Ascending aorta (tissue), 2 donors: ENCODE measurements at regions of chr3 and their contacts with region 1.

Region 1: DNA sequence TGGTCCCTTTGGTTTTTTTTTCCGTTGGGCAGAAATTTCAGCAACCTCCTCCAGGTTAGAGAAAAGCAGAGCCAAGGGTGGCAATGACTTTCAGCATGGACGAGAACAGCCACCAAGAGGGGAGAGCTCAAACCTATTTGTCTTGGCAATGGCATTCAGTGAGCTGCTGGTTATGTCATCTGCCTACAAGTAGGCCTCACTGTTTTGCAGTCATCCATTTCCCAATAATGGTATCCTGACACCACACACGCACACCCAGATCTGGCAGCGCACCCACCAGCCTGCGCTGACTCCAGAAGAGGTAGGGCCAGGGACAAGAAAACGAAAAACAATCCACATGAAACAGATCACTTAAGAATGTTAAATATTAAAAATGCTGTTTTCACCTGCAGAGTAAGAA is 92.3 kb downstream of the MAGI1 start:
- DNase-seq: peak; percentile 16 to 78
- H3K4me3 ChIP-seq: no peak overlapping the region
- H3K27ac ChIP-seq: peak overlapping the region; percentile 53 to 71
- H3K4me1 ChIP-seq: peaks cover 0 to 32% of the 10 kb centered on the region in 2 donors
- H3K27me3 ChIP-seq: no peaks in the 10 kb centered on the region
- CTCF ChIP-seq: no peak

Region 2: DNA sequence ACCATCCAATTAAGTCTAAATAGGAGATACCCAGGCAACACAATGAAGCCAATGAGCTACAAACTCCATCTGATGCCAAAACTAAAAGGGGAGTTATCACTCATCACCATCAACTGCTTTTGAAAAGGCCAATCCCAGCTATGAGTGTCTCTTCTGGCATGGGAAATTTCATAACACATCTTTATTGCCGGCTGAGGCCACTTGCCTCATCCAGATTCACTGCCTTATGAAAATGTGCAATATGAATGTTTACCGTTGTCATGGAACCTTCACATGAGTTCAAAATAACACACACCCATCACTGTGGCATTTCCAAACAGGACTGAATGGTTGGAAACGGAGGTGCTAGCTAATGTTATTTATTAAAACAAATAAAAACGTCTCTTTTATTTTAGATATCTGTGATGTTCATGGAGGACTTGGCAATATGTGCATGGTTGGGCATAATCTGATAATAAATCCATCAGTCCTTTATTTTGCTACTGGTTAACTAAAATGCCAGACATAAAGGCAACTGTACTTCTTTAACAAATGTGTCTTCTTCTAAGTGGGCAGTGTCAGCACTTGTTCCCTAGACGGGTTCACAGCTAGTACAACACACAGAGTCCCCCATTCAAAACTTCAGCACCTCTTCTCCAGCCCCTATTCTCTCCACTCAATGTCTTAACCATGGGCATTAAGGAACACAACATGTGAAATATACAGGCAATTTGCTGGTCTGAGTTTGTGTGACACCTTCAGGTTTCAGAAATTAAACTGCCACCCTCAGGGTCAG is 51.6 kb before region 1 on chr3:
- intact Hi-C with region 1: loop called (anchors 2 kb)
- DNase-seq: peak in 1 of 2 donors; percentile 76
- H3K4me3 ChIP-seq: no peak overlapping the region
- H3K27ac ChIP-seq: peak overlapping the region; percentile 76 to 84
- H3K4me1 ChIP-seq: peaks cover 3 to 30% of the 10 kb centered on the region in 2 donors
- H3K27me3 ChIP-seq: no peaks in the 10 kb centered on the region
- CTCF ChIP-seq: no peak